ENCODE measurements at regions of chr6 and their contacts with region 1.

Region 1: DNA sequence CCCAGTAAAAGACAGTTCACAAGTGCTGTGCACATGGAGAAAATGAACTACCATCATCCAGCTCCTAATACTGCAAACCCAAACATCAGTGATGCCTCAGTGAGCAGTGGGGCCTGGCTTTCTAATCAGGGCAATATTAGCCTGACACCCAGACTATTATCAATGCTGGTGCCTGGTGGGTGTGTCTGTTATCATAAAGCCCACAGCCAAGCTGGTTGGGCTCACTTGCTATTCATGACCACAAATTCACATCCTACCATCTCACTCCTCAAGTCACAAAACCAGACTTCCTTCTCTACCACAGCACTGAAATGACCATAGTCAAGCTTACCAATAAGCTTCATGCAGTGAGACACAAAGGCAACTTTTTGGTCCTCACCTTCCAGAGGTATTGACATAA is 180.8 kb upstream of the PLN start:
- DNase-seq: no peak
- ATAC-seq: no peak
- H3K4me3 ChIP-seq: no peak overlapping the region
- H3K4me3 Mint-ChIP-seq: no peak overlapping the region
- H3K27ac ChIP-seq: no peak overlapping the region
- H3K27ac Mint-ChIP-seq: no peak overlapping the region
- H3K4me1 ChIP-seq: no peaks in the 10 kb centered on the region
- H3K4me1 Mint-ChIP-seq: no peaks in the 10 kb centered on the region
- H3K27me3 ChIP-seq: no peaks in the 10 kb centered on the region
- H3K27me3 Mint-ChIP-seq: no peaks in the 10 kb centered on the region
- CTCF ChIP-seq: no peak

Region 2: DNA sequence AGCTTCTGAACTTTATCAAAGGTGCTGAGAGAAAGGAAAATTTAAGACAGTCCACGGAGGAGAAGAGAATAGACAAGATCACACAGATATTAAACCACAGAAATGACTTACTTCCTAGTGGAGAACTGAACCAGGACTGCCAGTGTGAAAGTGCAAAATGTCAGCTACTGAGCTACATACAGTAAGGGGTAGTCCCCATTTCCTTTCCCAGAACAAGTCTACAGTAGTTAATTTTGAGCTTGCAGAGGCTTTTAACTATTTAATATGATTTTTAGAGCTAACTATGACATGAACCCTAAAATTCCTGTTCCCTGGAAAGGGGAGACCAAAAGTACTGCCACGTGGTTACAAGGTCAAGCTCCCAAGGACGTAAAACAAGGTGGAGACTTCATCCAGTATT is 239.0 kb after region 1 on chr6:
- CTCF ChIA-PET with region 1: no interaction called
- POLR2A ChIA-PET with region 1: no interaction called
- intact Hi-C with region 1: no loop called
- DNase-seq: no peak
- ATAC-seq: no peak
- H3K4me3 ChIP-seq: no peak overlapping the region
- H3K4me3 Mint-ChIP-seq: no peak overlapping the region
- H3K27ac ChIP-seq: no peak overlapping the region
- H3K27ac Mint-ChIP-seq: peak overlapping the region; percentile 67
- H3K4me1 ChIP-seq: peaks cover 17% of the 10 kb centered on the region
- H3K4me1 Mint-ChIP-seq: peaks cover 48% of the 10 kb centered on the region
- H3K27me3 ChIP-seq: no peaks in the 10 kb centered on the region
- H3K27me3 Mint-ChIP-seq: no peaks in the 10 kb centered on the region
- CTCF ChIP-seq: no peak

Region 3: DNA sequence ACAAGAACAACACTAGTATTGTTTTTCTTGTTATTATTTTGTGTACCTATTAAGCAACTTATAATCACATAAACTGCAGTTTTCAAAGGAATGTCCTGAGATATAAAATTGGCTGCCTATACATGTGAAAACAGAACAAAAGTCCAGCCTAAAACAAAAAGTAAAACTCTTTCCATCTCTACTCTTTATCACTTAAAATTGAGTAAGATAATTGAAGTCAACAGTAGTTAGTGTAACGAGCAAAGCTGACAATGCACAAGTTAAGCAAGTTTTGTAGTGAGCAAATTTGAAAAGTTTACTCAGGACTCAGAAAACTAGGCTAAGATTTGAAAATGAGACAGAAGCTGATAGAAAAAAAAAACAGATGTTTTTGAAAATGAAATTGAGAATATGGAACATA is 1923.7 kb after region 1 on chr6:
- CTCF ChIA-PET with region 1: no interaction called
- POLR2A ChIA-PET with region 1: no interaction called
- intact Hi-C with region 1: loop called in 1 of 2 experiments (anchors 5 kb)
- DNase-seq: no peak
- ATAC-seq: no peak
- H3K4me3 ChIP-seq: no peak overlapping the region
- H3K4me3 Mint-ChIP-seq: no peak overlapping the region
- H3K27ac ChIP-seq: no peak overlapping the region
- H3K27ac Mint-ChIP-seq: no peak overlapping the region
- H3K4me1 ChIP-seq: no peaks in the 10 kb centered on the region
- H3K4me1 Mint-ChIP-seq: no peaks in the 10 kb centered on the region
- H3K27me3 ChIP-seq: no peaks in the 10 kb centered on the region
- H3K27me3 Mint-ChIP-seq: no peaks in the 10 kb centered on the region
- CTCF ChIP-seq: no peak